ENCODE measurements at regions of chr11 and their contacts with region 1.

Region 1: GRCh38 chr11:10797531-10797930 is 11.2 kb downstream of the EIF4G2 start:
- DNase-seq: no peak
- H3K4me3 ChIP-seq: no peak overlapping the region
- H3K27ac ChIP-seq: no peak overlapping the region
- H3K4me1 ChIP-seq: no peaks in the 10 kb centered on the region
- H3K27me3 ChIP-seq: no peaks in the 10 kb centered on the region
- CTCF ChIP-seq: no peak
- POLR2A ChIP-seq: no peak

Region 2: GRCh38 chr11:10540561-10540922 is 257.0 kb before region 1 on chr11:
- intact Hi-C with region 1: no loop called
- DNase-seq: peak; percentile 55
- H3K4me3 ChIP-seq: peak overlapping the region; percentile 82 to 87
- H3K27ac ChIP-seq: peak overlapping the region; percentile 93 to 95
- H3K4me1 ChIP-seq: peaks cover 2% of the 10 kb centered on the region
- H3K27me3 ChIP-seq: no peaks in the 10 kb centered on the region
- CTCF ChIP-seq: no peak
- POLR2A ChIP-seq: no peak

Region 3: GRCh38 chr11:10906513-10906912 is 109.0 kb after region 1 on chr11:
- intact Hi-C with region 1: loop called (anchors 5 kb)
- DNase-seq: no peak
- H3K4me3 ChIP-seq: no peak overlapping the region
- H3K27ac ChIP-seq: no peak overlapping the region
- H3K4me1 ChIP-seq: no peaks in the 10 kb centered on the region
- H3K27me3 ChIP-seq: no peaks in the 10 kb centered on the region
- CTCF ChIP-seq: no peak
- POLR2A ChIP-seq: no peak